Dendritic cell treated with granulocyte-macrophage colony-stimulating factor and Interleukin-4, amounts not matched to agents 40 ng/mL and 50 ng/mL, for 4 days (primary cell): ENCODE measurements at regions of chr6 and their contacts with region 1.

Region 1: DNA sequence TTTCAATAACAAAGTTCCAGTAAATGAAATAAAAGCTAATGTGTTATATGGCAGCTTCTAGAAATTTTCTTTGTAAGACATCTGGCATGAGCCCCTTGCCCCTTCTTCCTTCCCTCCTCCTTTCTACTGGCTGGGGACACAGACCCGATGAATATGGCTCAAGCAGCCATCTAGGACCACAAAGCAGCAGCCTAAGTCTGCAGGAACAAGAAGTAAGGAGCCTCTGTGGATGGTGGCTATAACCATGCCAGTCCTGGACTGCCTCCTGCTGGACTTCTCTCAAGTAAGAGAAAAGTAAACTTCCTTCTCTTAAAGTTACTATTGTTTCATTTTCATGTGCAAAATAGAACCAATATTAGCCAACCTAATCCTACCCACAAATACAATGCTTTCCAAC is 114.9 kb upstream of the DST start:
- H3K4me3 Mint-ChIP-seq: no peak overlapping the region
- H3K27ac Mint-ChIP-seq: no peak overlapping the region
- H3K4me1 Mint-ChIP-seq: peaks cover 26% of the 10 kb centered on the region
- H3K27me3 Mint-ChIP-seq: no peaks in the 10 kb centered on the region

Region 2: GRCh38 chr6:56637640-56638039 is 119.9 kb before region 1 on chr6:
- intact Hi-C with region 1: loop called (anchors 1 kb)
- H3K4me3 Mint-ChIP-seq: no peak overlapping the region
- H3K27ac Mint-ChIP-seq: no peak overlapping the region
- H3K4me1 Mint-ChIP-seq: no peaks in the 10 kb centered on the region
- H3K27me3 Mint-ChIP-seq: no peaks in the 10 kb centered on the region

Region 3: GRCh38 chr6:56708810-56709597 is 48.6 kb before region 1 on chr6:
- intact Hi-C with region 1: loop called (anchors 2 kb)
- H3K4me3 Mint-ChIP-seq: no peak overlapping the region
- H3K27ac Mint-ChIP-seq: peak overlapping the region; percentile 56
- H3K4me1 Mint-ChIP-seq: peaks cover 7% of the 10 kb centered on the region
- H3K27me3 Mint-ChIP-seq: no peaks in the 10 kb centered on the region

Region 4: GRCh38 chr6:56724455-56724854 is 33.1 kb before region 1 on chr6:
- intact Hi-C with region 1: no loop called
- H3K4me3 Mint-ChIP-seq: no peak overlapping the region
- H3K27ac Mint-ChIP-seq: no peak overlapping the region
- H3K4me1 Mint-ChIP-seq: peaks cover 3% of the 10 kb centered on the region
- H3K27me3 Mint-ChIP-seq: no peaks in the 10 kb centered on the region